ENCODE measurements at regions of chr11 and their contacts with region 1.

Region 1: GRCh38 chr11:90222459-90223247 is at the start of gene CHORDC1:
- DNase-seq: peak; percentile 93 to 94
- ATAC-seq: peak; percentile 93 to 99 (median 98)
- H3K4me3 ChIP-seq: peak within 1 kb of the TSS; percentile 67 to 92 (median 86)
- H3K27ac ChIP-seq: peak within 1 kb of the TSS; percentile 61 to 96 (median 92)
- H3K4me1 ChIP-seq: peaks cover 0 to 47% (median 37%) of the 10 kb centered on the region in 9 donors
- H3K27me3 ChIP-seq: no peaks in the 10 kb centered on the region
- CTCF ChIP-seq: no peak
- total RNA-seq, gene CHORDC1: 22.4 to 38.1 (median 27.7) TPM

Region 2: DNA sequence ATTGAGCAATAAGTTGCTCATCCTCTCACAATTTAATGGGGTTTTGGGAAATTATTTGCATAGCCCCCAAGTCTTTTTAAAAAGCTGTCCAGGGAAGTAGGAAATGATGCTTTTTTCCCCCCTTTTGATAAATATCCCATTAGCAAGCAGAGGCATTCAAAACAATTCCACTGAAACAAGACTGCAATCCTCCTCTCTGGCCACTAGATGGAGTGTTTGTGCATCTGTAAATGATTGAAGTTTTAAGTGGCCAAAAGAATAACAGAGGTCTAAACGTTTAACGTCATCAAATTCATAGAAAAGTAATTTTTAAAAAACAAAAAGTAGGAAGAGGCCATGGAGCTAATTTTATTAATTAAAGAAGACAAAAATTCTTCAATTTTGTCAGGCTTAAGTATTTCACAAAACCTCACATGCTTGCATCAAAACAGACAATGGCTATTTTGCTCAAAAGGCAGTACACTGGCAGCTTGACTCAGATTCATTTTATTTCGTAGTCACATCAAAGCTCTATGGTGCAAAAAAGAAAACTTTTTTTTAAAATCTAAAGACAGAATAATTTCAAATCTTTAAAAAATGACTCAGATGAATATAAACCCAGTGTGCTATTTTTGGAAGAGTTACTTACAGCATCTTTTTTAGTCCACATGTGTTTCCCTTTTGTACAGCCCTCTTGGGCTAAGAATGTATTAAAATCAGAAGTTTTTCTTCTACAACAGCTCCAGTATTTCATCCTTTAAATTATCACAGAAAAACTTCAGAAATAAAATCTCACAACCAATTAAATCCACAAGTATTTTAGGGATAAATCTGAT is 17.6 kb before region 1 on chr11:
- intact Hi-C with region 1: loop called in 1 of 10 experiments (anchors 2 kb)
- DNase-seq: no peak
- ATAC-seq: no peak
- H3K4me3 ChIP-seq: no peak overlapping the region
- H3K27ac ChIP-seq: no peak overlapping the region
- H3K4me1 ChIP-seq: peaks cover 0 to 14% (median 0%) of the 10 kb centered on the region in 9 donors
- H3K27me3 ChIP-seq: no peaks in the 10 kb centered on the region
- CTCF ChIP-seq: peak; percentile 76 to 93 (median 87)